ENCODE measurements at regions of chr1 and their contacts with region 1.

Region 1: GRCh38 chr1:234499119-234499942 is 20.4 kb upstream of the TARBP1 start:
- DNase-seq: peak; percentile 90 to 95 (median 92)
- ATAC-seq: peak; percentile 99
- H3K4me3 ChIP-seq: no peak overlapping the region
- H3K27ac ChIP-seq: peak overlapping the region; percentile 33
- H3K4me1 ChIP-seq: peaks cover 11 to 37% of the 10 kb centered on the region in 2 experiments
- H3K27me3 ChIP-seq: no peaks in the 10 kb centered on the region
- CTCF ChIP-seq: peak; percentile 95 to 99 (median 98)
- EP300 ChIP-seq: peak; percentile 14; the same call in 1 of the 2 replicates
- POLR2A ChIP-seq: no peak
- RAD21 ChIP-seq: peak; percentile 100

Region 2: DNA sequence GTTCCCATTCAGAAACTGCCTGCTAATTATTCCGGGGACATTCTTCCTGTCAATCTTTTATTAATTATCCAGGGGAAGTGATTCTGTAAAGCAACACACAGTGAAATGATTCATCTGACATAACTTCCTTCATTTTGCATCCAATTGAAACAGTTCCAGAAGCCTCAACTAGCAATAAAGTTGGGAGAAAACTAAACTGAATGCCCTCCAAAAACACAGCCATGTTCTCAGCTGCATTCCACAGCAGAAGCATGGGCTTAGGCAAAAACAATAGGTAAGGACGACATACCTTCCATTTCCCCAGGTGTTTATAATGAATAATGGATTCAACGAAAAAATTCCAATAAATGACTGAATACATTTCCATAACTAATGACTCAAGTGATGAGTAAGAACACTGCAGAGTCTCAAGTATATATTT is 16.5 kb after region 1 on chr1:
- CTCF ChIA-PET with region 1: no interaction called
- POLR2A ChIA-PET with region 1: no interaction called
- in situ Hi-C with region 1: no loop called
- intact Hi-C with region 1: no loop called
- DNase-seq: no peak
- ATAC-seq: no peak
- H3K4me3 ChIP-seq: no peak overlapping the region
- H3K27ac ChIP-seq: no peak overlapping the region
- H3K4me1 ChIP-seq: peaks cover 10 to 19% of the 10 kb centered on the region in 2 experiments; a peak in 4 of 5 replicates
- H3K27me3 ChIP-seq: no peaks in the 10 kb centered on the region
- CTCF ChIP-seq: no peak
- EP300 ChIP-seq: no peak
- POLR2A ChIP-seq: no peak
- RAD21 ChIP-seq: no peak

Region 3: DNA sequence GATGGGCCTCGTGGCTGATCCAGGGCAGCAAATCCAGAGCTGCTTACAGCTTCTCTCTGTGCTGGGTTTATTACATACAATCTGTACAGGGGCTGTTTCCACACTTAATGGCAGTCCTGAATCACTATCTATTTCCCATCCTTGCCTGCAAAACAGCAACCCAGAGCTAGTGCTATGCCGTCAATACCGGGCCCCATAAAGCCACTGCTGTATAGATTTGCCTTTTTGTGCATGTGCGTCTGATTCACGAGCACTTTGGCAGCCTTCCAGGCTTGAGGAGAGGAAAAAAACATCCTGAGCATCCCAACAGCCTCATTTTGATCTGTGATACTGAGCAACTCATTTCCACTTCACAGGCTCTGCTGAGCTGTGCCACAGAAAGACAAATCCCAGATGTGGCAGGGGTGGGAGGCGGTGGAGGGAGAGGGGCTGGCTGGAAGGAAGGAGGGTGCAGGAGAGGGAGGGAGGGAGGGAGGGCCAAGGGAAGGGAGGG is 44.8 kb after region 1 on chr1:
- CTCF ChIA-PET with region 1: no interaction called
- POLR2A ChIA-PET with region 1: interaction called, 3 read pairs
- in situ Hi-C with region 1: no loop called
- intact Hi-C with region 1: loop called (anchors 2 kb)
- DNase-seq: peak; percentile 45 to 92 (median 58)
- ATAC-seq: peak; percentile 61
- H3K4me3 ChIP-seq: no peak overlapping the region
- H3K27ac ChIP-seq: peak overlapping the region; percentile 72
- H3K4me1 ChIP-seq: peaks cover 30 to 53% of the 10 kb centered on the region in 2 experiments
- H3K27me3 ChIP-seq: no peaks in the 10 kb centered on the region
- CTCF ChIP-seq: no peak
- EP300 ChIP-seq: peak; percentile 12; the same call in 1 of the 2 replicates
- POLR2A ChIP-seq: no peak
- RAD21 ChIP-seq: no peak

Region 4: GRCh38 chr1:234610348-234611152 is 111.2 kb after region 1 on chr1:
- CTCF ChIA-PET with region 1: interaction called, 4 read pairs
- POLR2A ChIA-PET with region 1: interaction called, 12 read pairs
- in situ Hi-C with region 1: no loop called
- intact Hi-C with region 1: loop called (anchors 1 kb)
- DNase-seq: peak; percentile 70 to 84 (median 74)
- ATAC-seq: peak; percentile 3
- H3K4me3 ChIP-seq: peak overlapping the region; percentile 38
- H3K27ac ChIP-seq: peak overlapping the region; percentile 82
- H3K4me1 ChIP-seq: peaks cover 41 to 49% of the 10 kb centered on the region in 2 experiments
- H3K27me3 ChIP-seq: no peaks in the 10 kb centered on the region
- CTCF ChIP-seq: no peak; a peak in 1 of 6 replicates
- EP300 ChIP-seq: no peak
- POLR2A ChIP-seq: peak; percentile 78
- RAD21 ChIP-seq: peak in 1 of 2 experiments; percentile 36; a peak in 2 of 4 replicates

Region 5: DNA sequence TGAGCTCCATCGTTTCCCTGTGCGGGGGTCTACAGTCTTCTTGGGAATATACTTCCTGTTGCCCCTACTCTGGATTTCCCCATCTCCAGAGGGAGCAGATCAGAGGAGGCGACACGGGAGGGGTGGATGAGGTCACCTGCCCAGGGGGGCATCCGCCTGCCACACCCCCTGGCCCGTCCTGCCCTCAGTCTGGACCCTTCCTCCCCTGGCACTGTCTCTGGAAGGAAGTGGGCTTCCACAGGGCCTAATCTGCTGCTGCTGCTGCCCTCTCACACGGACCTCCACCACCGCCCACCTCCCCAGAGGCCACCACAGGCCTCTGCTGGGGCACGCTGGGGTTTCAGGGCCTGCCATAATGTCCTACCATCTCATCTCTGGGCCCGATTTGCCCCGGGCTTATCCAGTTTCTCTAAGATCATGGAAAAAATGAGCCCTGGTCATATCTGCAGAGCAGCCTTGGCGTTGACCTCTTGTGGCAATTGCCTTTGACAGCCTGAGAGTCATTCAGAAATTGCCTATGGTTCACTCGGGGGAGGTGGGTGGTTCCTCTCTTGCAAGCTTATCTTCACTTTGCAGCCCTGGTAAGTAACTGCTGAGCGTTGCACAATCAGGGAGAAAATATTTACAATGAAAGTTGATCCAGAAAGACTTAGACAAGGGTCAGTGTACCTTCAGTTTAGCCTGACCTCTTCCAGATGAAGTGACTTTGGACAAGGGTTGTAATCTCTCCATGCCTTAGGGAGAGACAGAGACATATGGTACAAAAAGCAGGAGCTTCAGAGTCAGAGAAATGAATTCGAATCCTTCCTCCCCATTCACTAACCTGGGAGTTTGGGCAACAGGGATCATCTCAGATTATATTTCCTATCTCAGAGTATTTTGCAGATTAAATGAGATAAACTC is 376.9 kb after region 1 on chr1:
- CTCF ChIA-PET with region 1: interaction called, 4 read pairs
- POLR2A ChIA-PET with region 1: no interaction called
- in situ Hi-C with region 1: loop called (anchors 10 kb)
- intact Hi-C with region 1: no loop called
- DNase-seq: peak; percentile 94 to 99 (median 95)
- ATAC-seq: peak; percentile 89
- H3K4me3 ChIP-seq: no peak overlapping the region
- H3K27ac ChIP-seq: peak overlapping the region; percentile 87
- H3K4me1 ChIP-seq: peaks cover 56 to 75% of the 10 kb centered on the region in 2 experiments
- H3K27me3 ChIP-seq: no peaks in the 10 kb centered on the region
- CTCF ChIP-seq: peak in 1 of 3 experiments; percentile 31; a peak in 1 of 6 replicates
- EP300 ChIP-seq: peak; percentile 100
- POLR2A ChIP-seq: no peak
- RAD21 ChIP-seq: peak; percentile 63 to 68

Region 6: GRCh38 chr1:235077571-235078479 is 578.5 kb after region 1 on chr1:
- CTCF ChIA-PET with region 1: no interaction called
- POLR2A ChIA-PET with region 1: no interaction called
- in situ Hi-C with region 1: no loop called
- intact Hi-C with region 1: loop called (anchors 1 kb)
- DNase-seq: no peak
- ATAC-seq: no peak
- H3K4me3 ChIP-seq: no peak overlapping the region
- H3K27ac ChIP-seq: no peak overlapping the region; the same call in 2 of the 3 replicates
- H3K4me1 ChIP-seq: peaks cover 21% of the 10 kb centered on the region in 2 experiments
- H3K27me3 ChIP-seq: no peaks in the 10 kb centered on the region
- CTCF ChIP-seq: no peak
- EP300 ChIP-seq: no peak
- POLR2A ChIP-seq: no peak
- RAD21 ChIP-seq: no peak